ENCODE measurements at regions of chr6 and their contacts with region 1.

Region 1: DNA sequence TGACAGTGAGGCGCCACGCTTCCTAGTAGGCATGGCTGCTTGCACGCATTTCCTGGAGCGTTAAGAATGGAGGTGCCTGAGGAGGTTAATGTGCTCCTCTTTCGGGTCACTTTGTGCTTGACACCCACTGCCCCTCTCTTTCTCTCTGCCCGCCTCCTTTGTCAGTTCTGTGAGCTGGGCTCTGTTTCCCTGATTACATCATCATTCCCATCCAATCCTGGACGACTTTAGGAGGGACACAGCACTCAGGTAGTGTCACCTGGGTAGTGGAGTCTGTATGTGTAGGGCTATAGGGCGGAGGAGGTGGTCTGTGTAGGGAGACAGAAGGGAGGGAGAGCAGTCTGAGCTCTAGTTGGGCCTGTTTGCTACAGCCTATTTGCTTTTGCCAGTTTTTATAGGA is 136.8 kb downstream of the JARID2 start:
- DNase-seq: no peak
- H3K4me3 ChIP-seq: no peak overlapping the region
- H3K27ac ChIP-seq: no peak overlapping the region
- H3K4me1 ChIP-seq: peaks cover 19% of the 10 kb centered on the region
- H3K27me3 ChIP-seq: no peaks in the 10 kb centered on the region
- CTCF ChIP-seq: no peak

Region 2: GRCh38 chr6:15109338-15110090 is 273.2 kb before region 1 on chr6:
- CTCF ChIA-PET with region 1: no interaction called
- dilution Hi-C with region 1: no loop called
- in situ Hi-C with region 1: no loop called
- intact Hi-C with region 1: no loop called
- DNase-seq: no peak
- H3K4me3 ChIP-seq: no peak overlapping the region
- H3K27ac ChIP-seq: no peak overlapping the region
- H3K4me1 ChIP-seq: no peaks in the 10 kb centered on the region
- H3K27me3 ChIP-seq: no peaks in the 10 kb centered on the region
- CTCF ChIP-seq: no peak

Region 3: DNA sequence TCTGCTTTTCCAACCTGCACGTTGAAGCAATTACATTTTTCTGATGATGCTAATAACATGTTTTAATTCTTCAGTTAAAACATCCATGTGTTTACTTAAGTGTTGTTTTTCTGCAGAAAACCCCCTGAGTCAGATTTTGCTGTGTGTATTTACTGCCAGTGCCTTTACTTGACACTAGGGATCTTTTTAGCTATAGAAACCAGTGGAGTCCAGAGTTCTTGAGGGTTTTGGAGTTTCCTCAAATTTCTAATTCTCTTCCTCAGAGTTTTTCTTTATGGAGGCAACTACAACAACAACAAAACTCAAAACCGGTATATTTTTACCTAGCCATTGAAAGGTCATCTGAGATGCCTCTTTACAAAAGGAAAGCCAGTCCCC is 31.5 kb after region 1 on chr6:
- CTCF ChIA-PET with region 1: interaction called, 10 read pairs
- dilution Hi-C with region 1: no loop called
- in situ Hi-C with region 1: no loop called
- intact Hi-C with region 1: no loop called
- DNase-seq: no peak
- H3K4me3 ChIP-seq: no peak overlapping the region
- H3K27ac ChIP-seq: no peak overlapping the region
- H3K4me1 ChIP-seq: peaks cover 11% of the 10 kb centered on the region
- H3K27me3 ChIP-seq: no peaks in the 10 kb centered on the region
- CTCF ChIP-seq: no peak

Region 4: DNA sequence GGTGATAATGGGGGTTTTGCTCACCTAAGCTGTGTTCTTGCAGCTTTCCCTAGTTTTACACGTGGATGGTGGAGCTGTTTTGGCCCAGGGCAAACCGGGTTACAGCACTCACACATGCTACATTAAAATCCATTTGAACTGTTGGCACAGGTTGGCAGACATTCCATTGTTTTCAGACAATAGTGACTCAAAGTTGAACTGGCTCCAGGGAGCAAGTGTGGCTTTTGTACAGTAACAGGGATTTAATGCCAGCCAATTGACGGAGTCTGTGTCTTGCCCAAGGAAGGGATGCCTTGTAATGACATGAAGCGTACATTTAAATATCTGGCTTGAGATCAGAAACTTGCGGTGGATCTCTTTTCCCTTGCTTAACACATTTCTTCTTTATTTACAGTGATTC is 97.0 kb after region 1 on chr6:
- CTCF ChIA-PET with region 1: no interaction called
- dilution Hi-C with region 1: no loop called
- in situ Hi-C with region 1: no loop called
- intact Hi-C with region 1: no loop called
- DNase-seq: peak; percentile 92
- H3K4me3 ChIP-seq: no peak overlapping the region
- H3K27ac ChIP-seq: no peak overlapping the region
- H3K4me1 ChIP-seq: peaks cover 19% of the 10 kb centered on the region
- H3K27me3 ChIP-seq: no peaks in the 10 kb centered on the region
- CTCF ChIP-seq: no peak

Region 5: GRCh38 chr6:15643542-15643941 is 260.8 kb after region 1 on chr6:
- CTCF ChIA-PET with region 1: no interaction called
- dilution Hi-C with region 1: no loop called
- in situ Hi-C with region 1: no loop called
- intact Hi-C with region 1: no loop called
- DNase-seq: no peak
- H3K4me3 ChIP-seq: no peak overlapping the region
- H3K27ac ChIP-seq: no peak overlapping the region
- H3K4me1 ChIP-seq: peaks cover 6% of the 10 kb centered on the region
- H3K27me3 ChIP-seq: no peaks in the 10 kb centered on the region
- CTCF ChIP-seq: no peak

Measured in mammary epithelial cell (primary cell).